Thyroid gland (tissue), 4 donors: ENCODE measurements at regions of chr22 and their contacts with region 1.

Region 1: DNA sequence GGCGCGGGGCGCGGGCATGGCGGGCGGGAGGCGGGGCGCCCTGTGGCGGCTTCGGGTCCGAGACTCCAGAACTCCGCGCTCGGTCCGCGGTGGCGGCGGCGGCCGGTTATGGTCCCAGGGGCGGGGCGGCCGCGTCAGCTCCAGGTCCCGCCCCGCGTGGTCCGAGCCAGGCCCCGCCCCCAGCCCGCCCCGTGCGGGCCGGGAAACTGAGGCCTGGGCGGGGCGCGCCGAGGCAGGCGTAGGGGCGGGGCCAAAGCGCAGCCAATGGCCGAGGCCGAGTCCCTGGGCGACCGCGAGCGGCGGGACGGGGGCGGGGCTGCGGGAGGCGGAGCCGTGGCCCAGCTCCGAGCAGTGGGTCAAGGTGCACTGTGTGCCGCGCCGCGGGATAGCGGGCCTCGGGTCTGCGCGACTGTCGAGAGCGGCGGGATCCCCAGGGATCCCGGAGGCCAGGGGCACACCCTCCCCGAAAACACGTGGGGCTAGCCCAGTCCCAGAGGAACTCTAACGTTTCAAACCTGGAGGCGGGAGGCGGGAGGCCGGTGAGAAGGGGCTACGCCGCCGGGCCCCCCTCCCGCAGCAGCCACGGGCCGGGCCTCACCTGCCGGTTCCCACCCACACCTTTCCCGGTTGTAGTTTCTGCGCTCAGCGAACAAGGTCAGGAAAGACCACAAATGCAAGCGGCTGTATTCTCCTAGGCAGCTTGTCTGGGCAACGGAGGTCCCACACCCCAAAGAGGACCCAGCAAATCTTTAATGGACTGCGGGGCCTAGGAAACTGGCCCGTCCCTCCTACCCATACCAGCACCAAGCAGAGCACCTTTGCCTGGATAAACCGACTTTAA is at the start of gene SLC25A1:
- DNase-seq: peak; percentile 92
- H3K4me3 ChIP-seq: peak within 1 kb of the TSS; percentile 77 to 92 (median 82)
- H3K27ac ChIP-seq: peak within 1 kb of the TSS; percentile 66 to 86 (median 76)
- H3K4me1 ChIP-seq: peaks cover 14 to 51% of the 10 kb centered on the region in 2 donors
- H3K27me3 ChIP-seq: no peaks in the 10 kb centered on the region
- CTCF ChIP-seq: no peak
- POLR2A ChIP-seq: peak; percentile 41 to 81
- total RNA-seq, gene SLC25A1: 38.7 to 79.9 (median 62.1) TPM

Region 2: DNA sequence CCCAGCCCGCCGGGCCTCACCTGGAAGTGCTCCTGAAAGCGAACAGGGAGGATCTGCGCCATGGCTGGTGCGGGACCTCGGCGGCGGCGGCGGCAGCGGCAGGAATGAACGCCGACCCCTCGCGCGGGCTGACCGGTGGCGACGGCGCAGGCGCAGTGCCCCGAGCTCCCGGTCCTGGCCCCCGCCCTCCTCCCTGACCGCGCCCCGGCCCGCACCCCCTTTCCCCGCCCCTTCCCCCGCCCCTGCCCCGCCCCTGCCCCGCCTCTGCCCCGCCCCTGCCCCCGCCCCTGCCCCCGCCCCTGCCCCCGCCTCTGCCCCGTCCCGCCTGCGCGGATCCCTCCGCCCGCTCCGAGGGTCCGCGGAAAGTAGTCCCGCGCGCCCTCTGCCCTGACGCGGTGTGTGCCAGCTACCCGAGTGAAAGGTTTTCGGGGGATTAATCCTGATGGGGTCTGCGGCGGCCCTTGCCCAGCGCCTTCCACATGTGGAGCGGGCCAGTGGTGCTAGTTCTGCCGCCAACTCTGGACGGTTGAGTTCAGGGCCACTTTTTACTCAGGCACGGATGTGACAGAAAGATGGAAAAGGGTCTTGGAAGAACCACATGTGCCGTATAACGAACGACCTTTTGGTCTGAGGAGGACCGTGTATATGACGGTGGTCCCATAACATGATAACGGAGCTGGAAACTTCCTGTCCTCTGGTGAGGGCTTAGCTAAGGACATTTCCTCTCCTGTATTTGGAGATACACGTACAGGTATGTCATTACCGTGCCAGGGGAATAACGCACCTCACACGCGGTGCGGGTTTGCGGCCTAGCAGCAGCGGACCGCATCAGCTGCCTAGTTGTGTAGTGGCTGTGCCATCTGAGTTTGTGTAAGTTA is 112.9 kb after region 1 on chr22 and contains the start of gene CLTCL1:
- intact Hi-C with region 1: loop called (anchors 5 kb)
- DNase-seq: peak; percentile 83 to 85
- H3K4me3 ChIP-seq: peak within 1 kb of the TSS; percentile 57 to 98 (median 74)
- H3K27ac ChIP-seq: peak within 1 kb of the TSS; percentile 62 to 76 (median 63)
- H3K4me1 ChIP-seq: peaks cover 15 to 24% of the 10 kb centered on the region in 2 donors
- H3K27me3 ChIP-seq: no peaks in the 10 kb centered on the region
- CTCF ChIP-seq: no peak
- POLR2A ChIP-seq: peak in 1 of 2 donors; percentile 83
- total RNA-seq, gene CLTCL1: 8.5 to 19.2 (median 12.8) TPM

Region 3: DNA sequence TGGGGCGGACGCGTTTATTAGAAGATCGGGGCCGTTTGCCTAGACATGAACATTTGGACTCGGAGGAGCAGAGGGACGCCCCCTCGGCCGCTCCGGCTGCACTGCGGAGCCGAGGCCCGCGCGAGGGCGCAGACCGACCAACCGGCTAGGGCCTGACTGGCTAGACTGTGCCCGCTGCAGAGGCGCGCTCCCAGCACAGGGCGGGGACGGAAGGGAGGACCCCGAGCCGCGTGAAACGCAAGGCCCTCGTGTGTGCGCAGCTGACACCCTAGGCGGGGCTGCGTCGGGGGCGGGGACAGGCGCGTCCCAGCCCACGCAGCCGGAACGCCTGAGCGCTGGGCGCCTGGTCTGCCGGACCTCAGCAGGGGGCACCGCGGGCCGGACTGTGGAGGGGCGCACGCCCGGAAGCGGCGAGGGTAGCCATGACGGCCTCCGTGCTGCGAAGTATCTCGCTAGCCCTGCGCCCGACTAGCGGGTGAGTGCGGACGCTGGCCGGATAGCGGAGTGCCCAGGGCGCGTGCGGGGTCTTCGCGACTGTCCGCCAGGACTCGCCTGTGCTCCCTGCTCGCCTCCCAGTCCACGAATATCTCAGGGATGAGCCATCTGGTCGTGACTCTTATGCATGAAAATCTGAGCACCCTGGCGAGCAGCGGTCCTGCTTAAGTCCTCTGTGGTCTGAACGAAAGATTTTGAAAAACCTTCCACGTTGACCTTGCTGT is 253.4 kb after region 1 on chr22 and contains the start of gene MRPL40:
- intact Hi-C with region 1: loop called (anchors 5 kb)
- DNase-seq: peak; percentile 96
- H3K4me3 ChIP-seq: peak within 1 kb of the TSS; percentile 78 to 98 (median 91)
- H3K27ac ChIP-seq: peak within 1 kb of the TSS; percentile 98 to 99 (median 99)
- H3K4me1 ChIP-seq: peaks cover 35 to 39% of the 10 kb centered on the region in 2 donors
- H3K27me3 ChIP-seq: no peaks in the 10 kb centered on the region
- CTCF ChIP-seq: peak in 2 of 6 experiments; percentile 2 to 29
- POLR2A ChIP-seq: peak; percentile 73 to 94
- total RNA-seq, gene MRPL40: 37.5 to 69.3 (median 48.7) TPM

Region 4: GRCh38 chr22:19479357-19480172 is 300.7 kb after region 1 on chr22 and contains the start of gene CDC45:
- intact Hi-C with region 1: loop called (anchors 10 kb)
- DNase-seq: peak; percentile 97 to 98
- H3K4me3 ChIP-seq: peak within 1 kb of the TSS; percentile 45 to 85 (median 69)
- H3K27ac ChIP-seq: peak within 1 kb of the TSS; percentile 96 to 99 (median 99)
- H3K4me1 ChIP-seq: peaks cover 15 to 16% of the 10 kb centered on the region in 2 donors
- H3K27me3 ChIP-seq: no peaks in the 10 kb centered on the region
- CTCF ChIP-seq: peak in 1 of 6 experiments; percentile 15
- POLR2A ChIP-seq: no peak
- total RNA-seq, gene CDC45: 0.24 to 1.9 (median 1.7) TPM in 3 of 4 donors, not detected in the other